SK-N-SH (cell line): ENCODE measurements at regions of chr1 and their contacts with region 1.

Region 1: DNA sequence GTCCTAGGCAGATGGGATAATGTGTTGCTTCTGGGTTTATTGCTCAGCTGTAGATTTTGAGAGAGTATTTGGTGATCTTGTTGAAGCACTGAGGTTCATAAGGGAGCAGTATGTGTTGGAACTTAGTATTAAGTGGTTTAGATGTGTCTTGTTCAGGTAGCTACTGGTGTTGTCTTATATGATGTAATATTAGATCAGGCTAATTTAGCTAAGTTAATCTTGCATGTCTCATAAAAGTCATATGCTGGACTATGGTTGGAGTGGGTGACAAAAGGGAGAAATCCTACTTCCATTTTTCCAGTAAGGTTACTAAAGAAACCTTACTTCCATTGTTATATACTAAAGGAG is 196.4 kb downstream of the CLEC20A start:
- DNase-seq: no peak
- H3K4me3 ChIP-seq: no peak overlapping the region; a peak in 1 of 4 replicates
- H3K27ac ChIP-seq: peak overlapping the region; percentile 15 to 80; a peak in 3 of 4 replicates
- H3K4me1 ChIP-seq: peaks cover 3 to 4% of the 10 kb centered on the region in 2 experiments; a peak in 2 of 4 replicates
- H3K27me3 ChIP-seq: no peaks in the 10 kb centered on the region
- CTCF ChIP-seq: no peak
- EP300 ChIP-seq: no peak
- RAD21 ChIP-seq: no peak

Region 2: GRCh38 chr1:178282949-178283367 is 17.4 kb before region 1 on chr1:
- CTCF ChIA-PET with region 1: interaction called, 17 read pairs
- POLR2A ChIA-PET with region 1: no interaction called
- DNase-seq: peak; percentile 24
- H3K4me3 ChIP-seq: no peak overlapping the region
- H3K27ac ChIP-seq: peak overlapping the region in 1 of 2 experiments; percentile 7; a peak in 1 of 4 replicates
- H3K4me1 ChIP-seq: peaks cover 0 to 4% of the 10 kb centered on the region in 2 experiments; a peak in 1 of 4 replicates
- H3K27me3 ChIP-seq: no peaks in the 10 kb centered on the region
- CTCF ChIP-seq: peak; percentile 75
- EP300 ChIP-seq: no peak
- RAD21 ChIP-seq: peak; percentile 64

Region 3: GRCh38 chr1:178310685-178311105 is 10.4 kb after region 1 on chr1:
- CTCF ChIA-PET with region 1: interaction called, 64 read pairs
- POLR2A ChIA-PET with region 1: no interaction called
- DNase-seq: peak; percentile 50
- H3K4me3 ChIP-seq: no peak overlapping the region
- H3K27ac ChIP-seq: no peak overlapping the region
- H3K4me1 ChIP-seq: no peaks in the 10 kb centered on the region; a peak in 1 of 4 replicates
- H3K27me3 ChIP-seq: no peaks in the 10 kb centered on the region
- CTCF ChIP-seq: peak; percentile 85
- EP300 ChIP-seq: no peak
- RAD21 ChIP-seq: peak; percentile 85

Region 4: DNA sequence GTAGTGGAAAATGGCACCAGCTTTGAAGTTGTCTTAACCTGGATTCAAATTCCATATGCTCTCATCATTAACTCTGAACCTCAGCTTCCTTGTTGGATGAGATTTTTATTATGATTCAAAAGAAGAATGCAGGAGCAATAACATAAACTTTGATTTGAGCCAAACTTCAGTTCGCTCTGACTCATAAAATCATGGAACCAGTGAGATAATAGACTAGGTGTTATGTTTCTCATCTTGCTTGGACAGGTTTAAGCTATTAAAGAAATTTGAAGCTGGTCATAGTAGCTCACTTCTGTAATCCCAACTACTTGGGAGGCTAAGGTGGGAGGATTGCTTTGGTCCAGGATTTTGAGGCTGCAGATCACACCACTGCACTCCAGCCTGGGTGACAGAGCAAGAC is 23.7 kb after region 1 on chr1:
- CTCF ChIA-PET with region 1: interaction called, 11 read pairs
- POLR2A ChIA-PET with region 1: no interaction called
- DNase-seq: no peak
- H3K4me3 ChIP-seq: no peak overlapping the region
- H3K27ac ChIP-seq: no peak overlapping the region
- H3K4me1 ChIP-seq: no peaks in the 10 kb centered on the region
- H3K27me3 ChIP-seq: no peaks in the 10 kb centered on the region
- CTCF ChIP-seq: no peak
- EP300 ChIP-seq: no peak
- RAD21 ChIP-seq: no peak

Region 5: GRCh38 chr1:178358456-178358855 is 58.1 kb after region 1 on chr1:
- CTCF ChIA-PET with region 1: no interaction called
- POLR2A ChIA-PET with region 1: no interaction called
- DNase-seq: no peak
- H3K4me3 ChIP-seq: no peak overlapping the region
- H3K27ac ChIP-seq: no peak overlapping the region
- H3K4me1 ChIP-seq: peaks cover 0 to 5% of the 10 kb centered on the region in 2 experiments; a peak in 2 of 4 replicates
- H3K27me3 ChIP-seq: no peaks in the 10 kb centered on the region
- CTCF ChIP-seq: no peak
- EP300 ChIP-seq: no peak
- RAD21 ChIP-seq: no peak